Esophagus squamous epithelium (tissue), 5 donors: ENCODE measurements at regions of chr7 and their contacts with region 1.

Region 1: DNA sequence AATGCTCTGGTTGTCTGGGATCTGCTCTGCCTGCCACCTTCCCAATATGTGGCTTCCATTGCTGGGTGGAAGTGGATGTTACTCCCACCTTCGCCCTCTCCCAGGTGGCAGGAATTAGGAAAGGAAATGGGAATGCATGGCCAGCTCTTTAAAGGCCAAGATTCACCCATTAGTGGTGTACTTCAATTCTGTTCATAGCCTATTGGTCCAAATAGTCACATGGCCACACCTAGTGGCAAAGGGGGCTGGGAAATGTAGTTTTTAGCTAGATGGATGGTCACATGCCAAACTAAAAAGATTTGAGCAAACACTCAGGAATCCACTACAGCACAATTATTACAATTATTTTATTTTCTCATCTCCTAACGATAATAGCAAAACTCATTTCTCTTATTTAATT is 135.1 kb downstream of the NPY start:
- DNase-seq: no peak
- H3K4me3 ChIP-seq: no peak overlapping the region
- H3K27ac ChIP-seq: no peak overlapping the region
- H3K4me1 ChIP-seq: no peaks in the 10 kb centered on the region
- H3K27me3 ChIP-seq: no peaks in the 10 kb centered on the region
- CTCF ChIP-seq: no peak
- POLR2A ChIP-seq: no peak

Region 2: DNA sequence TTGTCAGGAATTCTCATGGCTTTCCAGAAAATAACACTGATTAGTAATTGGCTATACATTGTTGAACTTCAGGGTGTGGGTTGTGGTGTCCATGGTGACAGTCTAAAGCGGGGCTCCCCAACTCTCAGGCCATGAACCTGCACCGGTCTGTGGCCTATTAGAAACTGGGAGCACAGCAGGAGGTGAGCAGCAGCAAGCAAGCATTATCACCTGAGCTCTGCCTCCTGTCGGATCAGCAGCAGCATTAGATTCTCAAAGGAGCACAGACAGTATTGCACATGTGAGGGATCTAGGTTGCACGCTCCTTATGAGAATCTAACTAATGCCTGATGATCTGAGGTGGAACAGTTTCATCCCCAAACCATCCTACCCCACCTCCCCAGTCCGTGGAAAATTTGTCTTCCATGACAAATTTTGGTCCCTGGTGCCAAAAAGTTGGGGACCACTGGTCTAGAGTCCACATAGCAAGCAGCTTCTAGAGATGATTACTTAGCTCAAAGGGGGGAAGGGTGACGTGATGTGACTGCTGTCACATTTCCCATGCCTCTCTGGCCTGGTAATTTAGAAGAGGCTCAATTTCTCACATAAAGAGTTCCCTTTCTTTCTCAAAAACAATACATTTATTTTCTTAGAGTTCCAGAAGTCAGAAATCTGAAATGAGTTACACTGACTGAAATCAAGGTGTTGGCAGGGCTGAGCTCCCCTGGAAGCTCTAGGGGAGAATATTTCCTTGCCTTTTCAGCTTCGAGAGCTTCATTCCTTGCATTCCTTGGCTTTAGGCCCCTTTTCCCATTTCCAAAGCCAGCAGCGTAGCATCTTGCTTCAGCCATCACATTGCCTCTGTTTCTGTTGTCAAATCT is 756.7 kb before region 1 on chr7:
- intact Hi-C with region 1: no loop called
- DNase-seq: no peak
- H3K4me3 ChIP-seq: no peak overlapping the region
- H3K27ac ChIP-seq: no peak overlapping the region
- H3K4me1 ChIP-seq: no peaks in the 10 kb centered on the region
- H3K27me3 ChIP-seq: no peaks in the 10 kb centered on the region
- CTCF ChIP-seq: no peak
- POLR2A ChIP-seq: no peak

Region 3: GRCh38 chr7:24665564-24666294 is 246.7 kb after region 1 on chr7:
- intact Hi-C with region 1: loop called (anchors 10 kb)
- DNase-seq: no peak
- H3K4me3 ChIP-seq: no peak overlapping the region
- H3K27ac ChIP-seq: no peak overlapping the region
- H3K4me1 ChIP-seq: peaks cover 0 to 5% (median 0%) of the 10 kb centered on the region in 3 donors
- H3K27me3 ChIP-seq: no peaks in the 10 kb centered on the region
- CTCF ChIP-seq: peak; percentile 30 to 68 (median 62)
- POLR2A ChIP-seq: no peak

Region 4: GRCh38 chr7:24741691-24742504 is 322.8 kb after region 1 on chr7:
- intact Hi-C with region 1: no loop called
- DNase-seq: no peak
- H3K4me3 ChIP-seq: no peak overlapping the region
- H3K27ac ChIP-seq: no peak overlapping the region
- H3K4me1 ChIP-seq: no peaks in the 10 kb centered on the region
- H3K27me3 ChIP-seq: no peaks in the 10 kb centered on the region
- CTCF ChIP-seq: no peak
- POLR2A ChIP-seq: no peak